Aorta (tissue), 5 donors: ENCODE measurements at regions of chr11 and their contacts with region 1.

Region 1: DNA sequence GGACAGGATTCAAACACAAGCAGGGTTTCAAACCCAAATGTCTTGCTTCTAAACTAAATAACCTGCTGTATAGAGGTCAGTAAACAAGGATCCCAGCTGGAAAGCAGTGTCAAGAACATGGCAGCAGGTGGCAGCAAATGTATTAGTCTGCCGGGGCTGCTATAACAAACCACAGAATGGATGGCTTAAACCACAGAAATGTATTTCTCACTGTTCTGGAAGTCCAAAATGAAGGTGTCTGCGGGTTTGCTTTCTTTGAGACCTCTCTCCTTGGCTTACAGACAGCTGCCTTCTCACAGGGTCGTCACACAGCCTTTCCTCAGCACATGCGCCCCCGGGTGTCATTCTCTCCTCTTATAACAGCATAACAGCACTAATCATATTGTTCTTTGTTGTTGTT is 65.1 kb upstream of the LRRC55 start:
- DNase-seq: no peak
- ATAC-seq: no peak
- H3K4me3 ChIP-seq: no peak overlapping the region
- H3K27ac ChIP-seq: no peak overlapping the region
- H3K4me1 ChIP-seq: no peaks in the 10 kb centered on the region
- H3K27me3 ChIP-seq: no peaks in the 10 kb centered on the region

Region 2: GRCh38 chr11:57249384-57250319 is 133.0 kb after region 1 on chr11:
- intact Hi-C with region 1: loop called in 1 of 2 experiments (anchors 10 kb)
- DNase-seq: peak; percentile 62 to 89
- ATAC-seq: peak; percentile 83
- H3K4me3 ChIP-seq: no peak overlapping the region
- H3K27ac ChIP-seq: no peak overlapping the region
- H3K4me1 ChIP-seq: no peaks in the 10 kb centered on the region
- H3K27me3 ChIP-seq: no peaks in the 10 kb centered on the region